ENCODE measurements at regions of chrX and their contacts with region 1.

Region 1: GRCh38 chrX:8364369-8365141 is 100.1 kb upstream of the VCX3B start:
- DNase-seq: no peak
- ATAC-seq: peak; percentile 42 to 78 (median 68)
- H3K4me3 ChIP-seq: no peak overlapping the region
- H3K27ac ChIP-seq: no peak overlapping the region
- H3K4me1 ChIP-seq: no peaks in the 10 kb centered on the region
- H3K27me3 ChIP-seq: no peaks in the 10 kb centered on the region
- CTCF ChIP-seq: peak; percentile 42

Region 2: GRCh38 chrX:8731559-8732395 is 367.2 kb after region 1 on chrX and contains the start of gene ANOS1:
- intact Hi-C with region 1: loop called in 1 of 2 experiments (anchors 5 kb)
- DNase-seq: peak; percentile 72 to 86
- ATAC-seq: peak; percentile 94 to 97 (median 95)
- H3K4me3 ChIP-seq: peak within 1 kb of the TSS; percentile 69
- H3K27ac ChIP-seq: peak within 1 kb of the TSS; percentile 69
- H3K4me1 ChIP-seq: no peaks in the 10 kb centered on the region
- H3K27me3 ChIP-seq: peaks cover 0 to 33% (median 0%) of the 10 kb centered on the region in 3 donors
- CTCF ChIP-seq: no peak
- total RNA-seq, gene ANOS1: 3.4 to 11.7 (median 5.9) TPM